ENCODE measurements at regions of chr17 and their contacts with region 1.

Region 1: GRCh38 chr17:63621766-63622519 is at the start of gene MAP3K3:
- DNase-seq: peak; percentile 100
- ATAC-seq: peak; percentile 88 to 96
- H3K4me3 ChIP-seq: peak within 1 kb of the TSS; percentile 92
- H3K27ac ChIP-seq: peak within 1 kb of the TSS; percentile 82 to 95
- H3K4me1 ChIP-seq: peaks cover 13% of the 10 kb centered on the region
- CTCF ChIP-seq: no peak
- EP300 ChIP-seq: no peak
- POLR2A ChIP-seq: peak; percentile 90
- RAD21 ChIP-seq: no peak
- polyA plus RNA-seq, gene MAP3K3: 10.8 and 12.6 TPM in 2 replicates

Region 2: GRCh38 chr17:63445979-63446691 is 175.8 kb before region 1 on chr17 and contains the start of gene CYB561:
- CTCF ChIA-PET with region 1: interaction called, 4 read pairs
- POLR2A ChIA-PET with region 1: interaction called, 11 read pairs
- DNase-seq: peak; percentile 81 to 92
- ATAC-seq: peak; percentile 88 to 94
- H3K4me3 ChIP-seq: peak within 1 kb of the TSS; percentile 69
- H3K27ac ChIP-seq: peak within 1 kb of the TSS; percentile 94 to 98
- H3K4me1 ChIP-seq: peaks cover 15% of the 10 kb centered on the region
- CTCF ChIP-seq: peak; percentile 61
- EP300 ChIP-seq: no peak
- POLR2A ChIP-seq: peak; percentile 47
- RAD21 ChIP-seq: peak in 1 of 2 experiments; percentile 44; a peak in 3 of 5 replicates
- polyA plus RNA-seq, gene CYB561: 16.6 and 19.7 TPM in 2 replicates

Region 3: GRCh38 chr17:63600569-63601438 is 21.1 kb before region 1 on chr17 and contains the start of gene TACO1:
- CTCF ChIA-PET with region 1: interaction called, 27 read pairs
- POLR2A ChIA-PET with region 1: interaction called, 11 read pairs
- DNase-seq: peak; percentile 90 to 91
- ATAC-seq: peak; percentile 94 to 95
- H3K4me3 ChIP-seq: peak within 1 kb of the TSS; percentile 88
- H3K27ac ChIP-seq: peak within 1 kb of the TSS; percentile 90 to 95
- H3K4me1 ChIP-seq: peaks cover 13% of the 10 kb centered on the region
- CTCF ChIP-seq: no peak
- EP300 ChIP-seq: no peak
- POLR2A ChIP-seq: peak; percentile 75
- RAD21 ChIP-seq: 0 out of 5 replicates have a peak, but pooled peaks of 1 of the 2 experiments have one; percentile 17
- polyA plus RNA-seq, gene TACO1: 38.0 and 49.9 TPM in 2 replicates